ENCODE measurements at regions of chr9 and their contacts with region 1.

Region 1: GRCh38 chr9:109903515-109904138 is 123.6 kb downstream of the PALM2AKAP2 start:
- H3K4me3 Mint-ChIP-seq: no peak overlapping the region
- H3K27ac Mint-ChIP-seq: no peak overlapping the region
- H3K4me1 Mint-ChIP-seq: peaks cover 15% of the 10 kb centered on the region
- H3K27me3 Mint-ChIP-seq: peaks cover 7% of the 10 kb centered on the region

Region 2: GRCh38 chr9:110058304-110058953 is 154.8 kb after region 1 on chr9:
- intact Hi-C with region 1: loop called (anchors 1 kb)
- H3K4me3 Mint-ChIP-seq: no peak overlapping the region
- H3K27ac Mint-ChIP-seq: peak overlapping the region; percentile 7
- H3K4me1 Mint-ChIP-seq: peaks cover 19% of the 10 kb centered on the region
- H3K27me3 Mint-ChIP-seq: no peaks in the 10 kb centered on the region